ENCODE measurements at regions of chr12 and their contacts with region 1.

Region 1: GRCh38 chr12:104870797-104871196 is 87.3 kb downstream of the SLC41A2 start:
- DNase-seq: no peak

Region 2: GRCh38 chr12:104381731-104382480 is 488.9 kb before region 1 on chr12:
- intact Hi-C with region 1: loop called in 1 of 2 experiments (anchors 5 kb)
- DNase-seq: peak; percentile 93

Region 3: GRCh38 chr12:104910196-104910840 is 39.5 kb after region 1 on chr12:
- intact Hi-C with region 1: no loop called
- DNase-seq: no peak

Measured in posterior vena cava (tissue), 2 donors.